Mammary epithelial cell (primary cell): ENCODE measurements at regions of chr4 and their contacts with region 1.

Region 1: GRCh38 chr4:29033703-29034102 is 1686.5 kb upstream of the PCDH7 start:
- DNase-seq: no peak
- H3K4me3 ChIP-seq: no peak overlapping the region
- H3K27ac ChIP-seq: no peak overlapping the region
- H3K4me1 ChIP-seq: no peaks in the 10 kb centered on the region
- H3K27me3 ChIP-seq: no peaks in the 10 kb centered on the region
- CTCF ChIP-seq: no peak

Region 2: GRCh38 chr4:29081234-29081955 is 47.7 kb after region 1 on chr4:
- CTCF ChIA-PET with region 1: no interaction called
- dilution Hi-C with region 1: loop called (anchors 5 kb)
- in situ Hi-C with region 1: no loop called
- intact Hi-C with region 1: no loop called
- DNase-seq: no peak
- H3K4me3 ChIP-seq: no peak overlapping the region
- H3K27ac ChIP-seq: no peak overlapping the region
- H3K4me1 ChIP-seq: no peaks in the 10 kb centered on the region
- H3K27me3 ChIP-seq: no peaks in the 10 kb centered on the region
- CTCF ChIP-seq: peak in 1 of 2 donors; percentile 27

Region 3: DNA sequence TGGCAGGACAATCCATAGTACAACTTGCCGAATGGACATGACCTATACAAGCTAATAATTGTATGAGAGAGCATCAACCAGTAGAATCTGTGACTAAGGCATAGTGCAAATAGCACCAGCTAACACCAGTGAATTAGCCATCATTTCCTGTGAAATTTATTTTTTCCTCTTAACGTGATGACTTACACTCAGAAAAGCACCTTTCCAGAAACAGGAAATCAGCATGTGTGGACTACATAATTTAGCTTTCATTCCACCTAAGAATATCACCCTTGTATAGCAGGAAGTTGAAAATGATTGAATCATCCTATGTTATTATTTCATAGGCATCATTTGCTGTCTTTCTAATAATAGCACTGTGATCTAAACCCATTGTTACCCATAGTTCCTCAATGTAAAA is 293.1 kb after region 1 on chr4:
- CTCF ChIA-PET with region 1: no interaction called
- dilution Hi-C with region 1: no loop called
- in situ Hi-C with region 1: no loop called
- intact Hi-C with region 1: no loop called
- DNase-seq: peak; percentile 1
- H3K4me3 ChIP-seq: no peak overlapping the region
- H3K27ac ChIP-seq: no peak overlapping the region
- H3K4me1 ChIP-seq: no peaks in the 10 kb centered on the region
- H3K27me3 ChIP-seq: no peaks in the 10 kb centered on the region
- CTCF ChIP-seq: no peak